PC-9 (cell line): ENCODE measurements at regions of chr3 and their contacts with region 1.

Region 1: GRCh38 chr3:189841473-189842210 is 210.5 kb downstream of the TP63 start:
- DNase-seq: peak; percentile 83 to 97
- H3K4me3 ChIP-seq: peak overlapping the region; percentile 40; the same call in 1 of the 2 replicates
- H3K27ac ChIP-seq: peak overlapping the region; percentile 97
- H3K4me1 ChIP-seq: peaks cover 26% of the 10 kb centered on the region
- H3K27me3 ChIP-seq: no peaks in the 10 kb centered on the region
- CTCF ChIP-seq: no peak

Region 2: DNA sequence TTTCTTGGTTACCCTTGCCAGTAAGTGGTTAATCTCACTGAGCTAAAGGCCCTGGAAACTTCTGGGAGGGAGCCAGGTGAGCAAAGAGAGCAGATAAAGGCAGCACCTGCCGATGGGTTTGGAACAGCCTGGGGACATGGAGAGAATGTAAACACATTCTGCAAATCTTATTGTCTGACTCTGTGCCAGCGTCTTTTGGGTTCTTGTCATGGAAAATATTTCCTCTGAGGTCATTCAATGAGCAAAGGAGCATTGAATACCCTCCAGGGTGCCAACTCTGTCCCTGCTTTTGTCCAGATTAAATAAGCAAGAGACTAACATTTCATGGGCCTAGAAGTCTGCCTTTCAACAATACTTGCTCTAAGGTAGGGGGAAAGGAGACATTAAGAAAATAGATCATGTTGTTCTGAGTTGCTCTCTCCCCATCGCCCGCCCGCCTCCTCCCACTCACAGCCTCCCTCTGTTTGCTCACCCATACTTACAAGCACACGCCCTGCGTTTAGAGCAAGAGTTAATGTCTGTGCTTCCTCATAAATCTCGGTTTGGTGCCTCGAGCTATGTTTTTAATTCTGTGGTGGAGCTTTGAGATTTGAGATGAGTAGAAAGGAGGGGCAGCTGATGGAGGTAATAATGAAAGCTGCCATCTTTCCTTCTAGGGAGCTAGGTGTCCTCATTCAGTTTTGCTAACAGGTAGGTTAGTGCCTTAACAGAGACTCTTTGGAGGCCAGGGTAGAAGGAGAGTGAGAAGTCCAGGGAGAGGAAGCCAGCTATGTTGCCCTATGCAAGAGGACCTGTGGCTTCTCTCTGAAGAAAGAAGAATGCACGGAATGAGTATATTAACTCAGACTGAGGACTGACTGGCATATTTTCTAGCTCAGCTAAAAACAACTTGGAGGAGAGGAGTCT is 536.9 kb before region 1 on chr3:
- CTCF ChIA-PET with region 1: no interaction called
- POLR2A ChIA-PET with region 1: interaction called, 7 read pairs
- intact Hi-C with region 1: loop called (anchors 1 kb)
- DNase-seq: peak; percentile 93 to 99
- H3K4me3 ChIP-seq: peak overlapping the region; percentile 27; the same call in 1 of the 2 replicates
- H3K27ac ChIP-seq: peak overlapping the region; percentile 85
- H3K4me1 ChIP-seq: peaks cover 44% of the 10 kb centered on the region
- H3K27me3 ChIP-seq: no peaks in the 10 kb centered on the region
- CTCF ChIP-seq: no peak

Region 3: GRCh38 chr3:189394599-189395121 is 447.0 kb before region 1 on chr3:
- CTCF ChIA-PET with region 1: no interaction called
- POLR2A ChIA-PET with region 1: interaction called, 3 read pairs
- intact Hi-C with region 1: loop called (anchors 1 kb)
- DNase-seq: no peak
- H3K4me3 ChIP-seq: no peak overlapping the region
- H3K27ac ChIP-seq: peak overlapping the region; percentile 89
- H3K4me1 ChIP-seq: peaks cover 36% of the 10 kb centered on the region
- H3K27me3 ChIP-seq: no peaks in the 10 kb centered on the region
- CTCF ChIP-seq: no peak

Region 4: DNA sequence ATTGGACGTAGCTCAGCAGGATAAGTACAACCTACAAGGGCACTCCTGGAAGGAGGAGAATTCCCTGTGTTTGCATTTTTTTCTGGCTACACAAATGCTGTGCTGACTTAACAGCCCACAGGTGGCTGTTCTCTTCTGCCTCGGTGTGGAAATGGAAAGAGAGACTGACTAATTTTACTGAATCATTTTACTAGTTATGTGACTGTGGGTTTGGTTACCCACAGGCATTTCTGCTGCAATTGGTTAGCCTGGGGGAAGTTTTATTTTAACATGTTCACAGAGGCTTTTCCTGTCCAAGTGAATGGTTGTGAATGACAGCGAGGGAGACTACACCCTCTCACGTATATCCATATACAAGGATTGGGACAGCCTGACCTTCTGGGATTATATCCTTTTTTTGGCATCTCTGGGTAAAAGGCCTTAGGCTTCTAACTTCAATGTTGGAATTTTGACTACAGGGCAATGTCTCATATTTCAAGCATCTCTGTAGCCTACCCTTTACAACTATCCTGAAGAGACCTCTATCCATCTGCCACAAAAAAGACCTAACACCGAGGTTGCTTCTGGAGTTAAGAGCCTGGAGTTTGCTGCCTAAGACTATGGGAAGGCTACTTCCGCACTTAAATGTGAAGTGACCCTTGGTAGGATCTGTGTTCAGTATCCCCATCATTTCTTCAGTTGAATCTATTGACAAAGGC is 277.6 kb before region 1 on chr3:
- CTCF ChIA-PET with region 1: no interaction called
- POLR2A ChIA-PET with region 1: no interaction called
- intact Hi-C with region 1: loop called (anchors 2 kb)
- DNase-seq: peak; percentile 68 to 92
- H3K4me3 ChIP-seq: no peak overlapping the region
- H3K27ac ChIP-seq: peak overlapping the region; percentile 78
- H3K4me1 ChIP-seq: peaks cover 27% of the 10 kb centered on the region
- H3K27me3 ChIP-seq: no peaks in the 10 kb centered on the region
- CTCF ChIP-seq: no peak

Region 5: DNA sequence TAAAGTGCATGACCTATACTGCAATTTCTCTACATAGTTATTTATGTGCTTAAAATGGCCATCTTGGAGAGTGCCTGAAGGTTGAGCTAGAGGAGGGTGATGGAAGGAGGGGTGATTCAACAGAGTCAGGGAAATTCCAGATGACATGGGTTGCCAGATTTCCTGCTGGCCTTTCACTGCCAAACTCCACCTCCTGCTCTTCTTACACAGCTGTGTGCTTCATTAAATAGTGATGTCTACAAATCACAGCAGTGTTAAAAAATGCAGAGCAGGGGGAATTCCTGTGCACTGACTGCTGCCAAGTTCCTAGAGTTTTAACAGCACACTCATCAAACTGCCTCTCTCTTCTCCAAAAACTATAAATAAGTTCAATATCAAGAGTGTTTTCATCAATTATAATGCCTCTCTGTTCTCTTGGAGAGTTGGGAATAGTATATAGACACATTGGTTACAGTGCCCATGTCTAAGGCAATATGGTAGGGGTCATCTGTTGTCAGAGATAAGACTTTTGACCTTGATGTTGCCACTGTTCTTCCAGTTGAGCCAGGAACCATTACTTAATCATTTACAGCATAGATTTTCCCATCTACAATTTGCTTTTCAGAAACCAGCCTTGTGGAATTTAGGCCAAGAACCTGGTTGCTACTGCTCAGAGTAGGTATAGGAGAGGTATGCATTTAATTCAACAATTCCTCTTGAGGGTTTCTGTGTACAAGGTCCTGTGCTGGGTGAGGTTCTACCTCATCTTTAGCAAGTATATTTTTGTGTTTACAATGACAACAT is 130.8 kb before region 1 on chr3:
- CTCF ChIA-PET with region 1: no interaction called
- POLR2A ChIA-PET with region 1: no interaction called
- intact Hi-C with region 1: loop called (anchors 1 kb)
- DNase-seq: peak; percentile 65 to 68
- H3K4me3 ChIP-seq: no peak overlapping the region
- H3K27ac ChIP-seq: peak overlapping the region; percentile 16; the same call in 1 of the 2 replicates
- H3K4me1 ChIP-seq: peaks cover 24% of the 10 kb centered on the region
- H3K27me3 ChIP-seq: no peaks in the 10 kb centered on the region
- CTCF ChIP-seq: no peak

Region 6: GRCh38 chr3:189773041-189773451 is 68.6 kb before region 1 on chr3:
- CTCF ChIA-PET with region 1: interaction called, 10 read pairs
- POLR2A ChIA-PET with region 1: no interaction called
- intact Hi-C with region 1: no loop called
- DNase-seq: peak in 1 of 2 experiments; percentile 94
- H3K4me3 ChIP-seq: peak overlapping the region; percentile 16; the same call in 1 of the 2 replicates
- H3K27ac ChIP-seq: peak overlapping the region; percentile 90
- H3K4me1 ChIP-seq: peaks cover 34% of the 10 kb centered on the region
- H3K27me3 ChIP-seq: no peaks in the 10 kb centered on the region
- CTCF ChIP-seq: no peak

Region 7: GRCh38 chr3:189890496-189890895 is 48.9 kb after region 1 on chr3:
- CTCF ChIA-PET with region 1: no interaction called
- POLR2A ChIA-PET with region 1: no interaction called
- intact Hi-C with region 1: no loop called
- DNase-seq: no peak
- H3K4me3 ChIP-seq: no peak overlapping the region
- H3K27ac ChIP-seq: no peak overlapping the region
- H3K4me1 ChIP-seq: no peaks in the 10 kb centered on the region
- H3K27me3 ChIP-seq: no peaks in the 10 kb centered on the region
- CTCF ChIP-seq: no peak